Upper lobe of right lung (tissue), 1 donor: ENCODE measurements at regions of chr18 and their contacts with region 1.

Region 1: DNA sequence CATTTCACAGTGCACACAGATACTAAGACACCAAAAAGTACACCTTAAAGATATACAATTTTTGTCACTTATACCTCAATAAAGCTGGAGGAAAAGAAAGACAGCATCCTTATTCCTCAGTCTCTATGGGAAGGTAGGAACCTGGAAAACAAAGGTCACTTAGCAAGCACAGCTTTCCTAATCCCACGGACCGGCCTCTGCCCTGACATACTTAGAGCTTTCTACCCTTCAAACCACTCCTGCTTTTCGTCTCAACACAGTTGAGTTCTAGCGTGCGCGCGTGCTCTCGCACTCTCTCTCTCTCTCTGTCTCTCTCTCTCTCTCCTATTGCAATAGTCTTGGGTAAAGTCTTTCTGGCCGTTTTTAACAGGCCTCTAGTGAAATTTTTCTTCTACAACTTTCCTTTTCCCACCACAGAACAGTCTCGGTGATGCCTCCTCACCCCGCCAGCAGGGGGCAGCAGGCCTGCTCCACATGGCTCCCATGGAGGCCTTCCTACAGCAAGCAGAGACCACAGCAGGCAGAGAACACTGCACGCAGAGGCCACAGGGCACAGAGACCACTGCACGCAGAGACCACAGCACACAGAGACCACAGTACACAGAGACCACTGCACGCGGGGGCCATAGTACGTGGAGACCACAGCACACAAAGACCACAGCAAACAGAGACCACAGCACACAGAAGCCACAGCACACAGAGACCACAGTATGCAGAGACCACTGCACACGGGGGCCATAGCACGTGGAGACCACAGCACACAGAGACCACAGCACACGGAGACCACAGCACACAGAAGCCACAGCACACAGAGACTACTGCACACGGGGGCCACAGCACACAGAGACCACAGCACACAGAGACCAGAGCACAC is 106.9 kb downstream of the FBXO15 start:
- DNase-seq: peak; percentile 85
- ATAC-seq: peak; percentile 92
- H3K4me3 ChIP-seq: no peak overlapping the region
- H3K27ac ChIP-seq: no peak overlapping the region
- H3K4me1 ChIP-seq: no peaks in the 10 kb centered on the region
- H3K27me3 ChIP-seq: no peaks in the 10 kb centered on the region
- CTCF ChIP-seq: peak; percentile 57

Region 2: GRCh38 chr18:74116633-74117554 is 76.2 kb after region 1 on chr18:
- intact Hi-C with region 1: loop called (anchors 10 kb)
- DNase-seq: no peak
- ATAC-seq: peak; percentile 74
- H3K4me3 ChIP-seq: no peak overlapping the region
- H3K27ac ChIP-seq: no peak overlapping the region
- H3K4me1 ChIP-seq: no peaks in the 10 kb centered on the region
- H3K27me3 ChIP-seq: no peaks in the 10 kb centered on the region
- CTCF ChIP-seq: peak; percentile 62

Region 3: GRCh38 chr18:74234326-74235171 is 193.9 kb after region 1 on chr18:
- intact Hi-C with region 1: no loop called
- DNase-seq: no peak
- ATAC-seq: peak; percentile 93
- H3K4me3 ChIP-seq: no peak overlapping the region
- H3K27ac ChIP-seq: peak overlapping the region; percentile 67
- H3K4me1 ChIP-seq: peaks cover 20% of the 10 kb centered on the region
- H3K27me3 ChIP-seq: no peaks in the 10 kb centered on the region
- CTCF ChIP-seq: no peak